ENCODE measurements at regions of chr15 and their contacts with region 1.

Region 1: GRCh38 chr15:25438601-25439368 is at the start of gene UBE3A:
- DNase-seq: peak; percentile 91
- H3K4me3 Mint-ChIP-seq: peak within 1 kb of the TSS; percentile 89
- H3K27ac Mint-ChIP-seq: peak within 1 kb of the TSS; percentile 87
- H3K4me1 Mint-ChIP-seq: peaks cover 23% of the 10 kb centered on the region
- H3K27me3 Mint-ChIP-seq: no peaks in the 10 kb centered on the region
- total RNA-seq, gene UBE3A: 89.0 to 102 TPM

Region 2: DNA sequence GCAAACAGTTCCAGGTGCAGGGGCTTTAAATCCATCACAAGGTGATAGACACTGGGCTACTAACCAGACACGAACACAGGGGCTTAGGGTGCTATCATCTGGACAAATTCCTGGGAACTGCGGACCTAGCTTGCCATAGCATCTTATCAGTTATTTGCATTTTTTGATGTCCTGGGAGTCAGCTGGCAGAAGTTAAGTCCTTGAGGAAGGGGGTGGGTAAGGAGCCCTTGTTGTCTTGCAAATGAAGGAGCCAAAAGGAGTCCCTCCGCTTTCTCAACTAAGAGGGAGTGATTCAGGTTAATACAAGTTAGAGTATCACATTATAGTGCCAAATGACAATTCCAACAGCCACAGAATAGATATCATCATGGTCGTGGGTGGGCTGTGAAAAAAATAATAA is 654.3 kb before region 1 on chr15:
- CTCF ChIA-PET with region 1: no interaction called
- POLR2A ChIA-PET with region 1: no interaction called
- intact Hi-C with region 1: no loop called
- DNase-seq: no peak
- H3K4me3 Mint-ChIP-seq: no peak overlapping the region
- H3K27ac Mint-ChIP-seq: no peak overlapping the region
- H3K4me1 Mint-ChIP-seq: no peaks in the 10 kb centered on the region
- H3K27me3 Mint-ChIP-seq: no peaks in the 10 kb centered on the region

Region 3: DNA sequence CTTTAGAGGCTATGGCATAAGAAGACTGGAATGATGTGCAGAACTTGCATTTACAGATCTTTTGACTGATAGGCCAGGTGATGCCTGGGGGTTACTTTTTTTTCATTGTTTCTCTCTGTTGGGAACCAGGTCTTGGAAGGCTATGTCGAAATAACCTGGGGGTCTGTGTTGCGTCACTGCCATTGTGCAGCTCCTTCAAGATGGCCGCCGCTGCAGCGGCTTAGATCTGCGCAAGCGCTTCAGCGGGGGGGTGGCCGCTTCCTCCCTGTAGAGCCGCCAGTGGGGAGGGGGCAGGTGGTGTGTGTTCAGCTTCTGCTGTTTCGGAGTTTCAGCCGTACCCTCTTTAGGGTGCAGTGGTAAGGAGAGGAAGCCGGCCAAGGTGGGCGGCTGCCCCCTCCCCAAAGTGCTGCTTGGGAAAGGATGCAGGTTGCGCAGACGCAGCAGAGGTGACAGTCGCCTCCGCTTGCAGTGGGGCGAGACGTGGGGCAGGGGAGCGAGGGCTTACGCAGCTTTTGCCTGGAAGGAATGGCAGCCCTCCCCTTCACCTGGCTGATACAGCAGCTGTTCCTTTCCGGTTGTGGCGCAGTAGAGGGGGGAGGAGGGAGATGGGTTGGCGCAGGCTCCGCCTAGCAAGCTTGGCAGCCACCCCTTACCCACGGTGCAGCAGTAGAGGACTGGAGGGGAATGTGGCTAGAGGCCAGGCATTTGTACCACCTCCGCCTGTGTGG is 482.5 kb before region 1 on chr15:
- CTCF ChIA-PET with region 1: no interaction called
- POLR2A ChIA-PET with region 1: no interaction called
- intact Hi-C with region 1: loop called (anchors 1 kb)
- DNase-seq: peak; percentile 82
- H3K4me3 Mint-ChIP-seq: peak overlapping the region; percentile 91
- H3K27ac Mint-ChIP-seq: peak overlapping the region; percentile 96
- H3K4me1 Mint-ChIP-seq: peaks cover 13% of the 10 kb centered on the region
- H3K27me3 Mint-ChIP-seq: peaks cover 1% of the 10 kb centered on the region

Region 4: GRCh38 chr15:25378501-25378901 is 60.3 kb before region 1 on chr15:
- CTCF ChIA-PET with region 1: no interaction called
- POLR2A ChIA-PET with region 1: no interaction called
- intact Hi-C with region 1: loop called (anchors 5 kb)
- DNase-seq: no peak
- H3K4me3 Mint-ChIP-seq: no peak overlapping the region
- H3K27ac Mint-ChIP-seq: no peak overlapping the region
- H3K4me1 Mint-ChIP-seq: peaks cover 41% of the 10 kb centered on the region
- H3K27me3 Mint-ChIP-seq: no peaks in the 10 kb centered on the region

Region 5: DNA sequence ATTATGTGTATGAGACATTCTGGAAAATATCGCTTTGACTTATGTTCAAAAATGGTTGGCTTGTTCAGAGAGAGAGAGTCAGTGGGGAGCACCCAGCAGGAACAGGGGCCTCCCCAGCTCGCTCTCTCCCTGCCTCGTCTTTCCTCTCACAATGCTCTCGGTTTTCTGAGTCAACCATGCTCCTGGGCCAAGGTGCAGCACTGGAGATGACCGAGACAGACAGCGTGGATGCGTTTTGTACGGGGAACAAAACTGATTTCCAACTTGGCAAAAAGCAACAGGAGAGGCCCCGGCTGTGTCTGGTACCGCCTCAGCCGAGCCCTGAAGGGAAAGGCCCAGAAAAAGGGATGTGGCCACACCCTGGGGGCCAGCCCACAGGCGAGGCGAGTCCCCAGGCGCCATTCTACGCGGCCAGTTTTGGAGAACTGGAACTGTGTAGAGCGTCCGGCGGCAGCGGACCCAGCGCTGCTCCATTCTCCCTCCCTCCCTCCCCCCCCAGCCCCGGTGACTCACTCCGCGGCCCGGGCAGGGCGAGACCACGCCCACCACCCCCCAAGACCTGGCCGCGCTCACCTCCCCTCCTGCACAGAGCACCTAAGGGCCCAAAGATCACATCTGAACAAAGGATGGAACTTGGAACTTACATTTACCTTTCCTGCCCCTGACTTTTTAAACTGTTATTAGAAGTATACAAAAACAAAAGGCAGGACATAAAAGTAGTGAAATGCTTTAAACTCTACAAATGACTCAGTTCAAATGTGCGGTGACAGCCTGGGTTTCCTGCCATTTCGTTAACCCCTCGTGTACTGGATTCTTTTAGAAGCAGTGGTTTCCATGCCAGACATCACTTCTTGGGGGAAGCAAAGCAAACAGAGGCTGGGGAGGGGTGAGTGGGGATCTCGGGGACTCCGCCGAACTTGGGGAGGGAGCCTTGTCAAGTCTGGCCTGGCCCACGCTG is 411.6 kb after region 1 on chr15:
- CTCF ChIA-PET with region 1: no interaction called
- POLR2A ChIA-PET with region 1: no interaction called
- intact Hi-C with region 1: loop called (anchors 5 kb)
- DNase-seq: peak; percentile 89
- H3K4me3 Mint-ChIP-seq: peak overlapping the region; percentile 82
- H3K27ac Mint-ChIP-seq: peak overlapping the region; percentile 88
- H3K4me1 Mint-ChIP-seq: peaks cover 86% of the 10 kb centered on the region
- H3K27me3 Mint-ChIP-seq: no peaks in the 10 kb centered on the region

Region 6: GRCh38 chr15:26082221-26083109 is 643.7 kb after region 1 on chr15:
- CTCF ChIA-PET with region 1: no interaction called
- POLR2A ChIA-PET with region 1: no interaction called
- intact Hi-C with region 1: loop called (anchors 5 kb)
- DNase-seq: peak; percentile 97
- H3K4me3 Mint-ChIP-seq: peak overlapping the region; percentile 76
- H3K27ac Mint-ChIP-seq: peak overlapping the region; percentile 95
- H3K4me1 Mint-ChIP-seq: peaks cover 45% of the 10 kb centered on the region
- H3K27me3 Mint-ChIP-seq: peaks cover 2% of the 10 kb centered on the region

Region 7: GRCh38 chr15:26126070-26126469 is 687.3 kb after region 1 on chr15:
- CTCF ChIA-PET with region 1: no interaction called
- POLR2A ChIA-PET with region 1: no interaction called
- intact Hi-C with region 1: no loop called
- DNase-seq: no peak
- H3K4me3 Mint-ChIP-seq: no peak overlapping the region
- H3K27ac Mint-ChIP-seq: no peak overlapping the region
- H3K4me1 Mint-ChIP-seq: no peaks in the 10 kb centered on the region
- H3K27me3 Mint-ChIP-seq: peaks cover 12% of the 10 kb centered on the region

Measured in activated CD4-positive, alpha-beta memory T cell treated with anti-CD3 and anti-CD28 coated beads for 36 hours (primary cell).